Activated CD4-positive, alpha-beta memory T cell treated with anti-CD3 and anti-CD28 coated beads for 36 hours (primary cell): ENCODE measurements at regions of chr13 and their contacts with region 1.

Region 1: DNA sequence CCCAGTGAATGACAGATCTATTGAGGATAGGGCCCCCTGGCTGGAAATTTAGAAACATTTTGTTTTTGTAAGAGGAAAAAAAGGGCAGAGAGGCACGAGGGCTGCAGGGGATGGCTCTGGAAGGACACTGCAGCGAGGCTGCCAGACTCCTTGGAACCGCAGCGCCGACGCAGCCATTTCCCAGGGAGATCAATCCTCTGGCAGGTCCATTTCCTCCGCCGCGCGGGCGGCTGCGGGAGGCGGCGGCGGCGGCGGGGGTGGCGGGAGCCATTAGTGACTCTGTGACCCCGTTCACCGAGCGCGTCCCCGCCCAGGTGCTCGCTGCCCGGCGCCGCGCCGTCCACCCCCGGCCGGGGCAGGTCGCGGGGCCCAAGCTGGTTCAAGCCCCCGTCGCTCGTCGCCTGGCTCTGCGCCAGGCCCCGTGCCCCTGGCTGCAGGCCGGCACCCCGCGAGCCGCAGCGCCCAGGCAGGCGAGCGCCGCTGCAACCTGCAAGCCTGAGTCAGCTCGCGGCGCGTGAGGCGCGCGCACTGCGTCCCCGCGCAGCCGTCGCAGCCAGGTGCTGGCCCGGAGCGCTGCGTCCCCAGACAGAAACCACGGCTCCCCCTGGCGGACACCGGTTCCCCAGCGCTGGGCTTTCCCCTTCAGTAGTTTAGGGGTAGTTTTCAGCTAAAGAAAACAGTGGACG is 192.6 kb downstream of the KATNAL1 start:
- DNase-seq: peak; percentile 95
- H3K4me3 Mint-ChIP-seq: peak overlapping the region; percentile 74
- H3K27ac Mint-ChIP-seq: no peak overlapping the region
- H3K4me1 Mint-ChIP-seq: peaks cover 32% of the 10 kb centered on the region
- H3K27me3 Mint-ChIP-seq: peaks cover 1% of the 10 kb centered on the region

Region 2: DNA sequence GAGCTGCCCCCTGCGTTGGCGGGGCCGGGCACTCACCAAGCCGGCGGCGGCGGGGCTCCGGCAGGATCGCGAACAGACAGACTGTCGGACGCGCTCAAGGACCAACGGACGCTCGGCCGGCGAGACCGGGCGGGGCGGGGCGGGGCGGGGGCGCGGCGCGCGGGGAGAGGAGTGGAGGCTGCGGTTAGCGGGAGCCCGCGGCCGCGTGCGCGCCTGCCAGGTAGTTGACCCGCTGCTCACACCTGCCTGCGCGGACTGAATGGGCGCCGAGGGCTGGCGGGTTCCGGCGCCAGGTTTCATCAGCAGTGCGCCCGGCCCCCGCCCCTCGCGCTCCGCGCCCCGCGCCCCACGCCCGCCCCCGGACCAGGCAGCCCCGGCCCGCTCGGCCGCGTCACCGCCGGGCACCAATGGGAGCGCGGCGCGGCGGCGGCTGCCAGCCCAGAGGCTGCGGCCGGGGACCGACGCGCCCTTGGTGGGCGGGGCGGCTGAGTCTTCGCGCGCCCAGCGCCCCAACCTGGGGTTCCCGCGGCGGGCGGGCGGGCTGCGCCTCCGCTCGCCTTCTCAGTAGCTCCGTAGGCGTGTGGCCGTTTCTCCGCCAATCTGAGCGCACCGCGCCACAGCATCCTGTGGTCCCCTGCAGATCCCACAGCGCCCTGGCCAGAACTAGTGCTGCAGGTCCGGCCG is 519.2 kb before region 1 on chr13 and contains the start of gene SLC7A1:
- CTCF ChIA-PET with region 1: interaction called, 3 read pairs
- POLR2A ChIA-PET with region 1: no interaction called
- intact Hi-C with region 1: loop called (anchors 1 kb)
- DNase-seq: peak; percentile 90
- H3K4me3 Mint-ChIP-seq: peak within 1 kb of the TSS; percentile 89
- H3K27ac Mint-ChIP-seq: peak within 1 kb of the TSS; percentile 97
- H3K4me1 Mint-ChIP-seq: peaks cover 45% of the 10 kb centered on the region
- H3K27me3 Mint-ChIP-seq: peaks cover 1% of the 10 kb centered on the region
- total RNA-seq, gene SLC7A1: 106 to 114 TPM

Region 3: GRCh38 chr13:29805994-29806979 is 308.4 kb before region 1 on chr13:
- CTCF ChIA-PET with region 1: interaction called, 10 read pairs
- POLR2A ChIA-PET with region 1: no interaction called
- intact Hi-C with region 1: no loop called
- DNase-seq: peak; percentile 61
- H3K4me3 Mint-ChIP-seq: no peak overlapping the region
- H3K27ac Mint-ChIP-seq: no peak overlapping the region
- H3K4me1 Mint-ChIP-seq: peaks cover 43% of the 10 kb centered on the region
- H3K27me3 Mint-ChIP-seq: no peaks in the 10 kb centered on the region

Region 4: DNA sequence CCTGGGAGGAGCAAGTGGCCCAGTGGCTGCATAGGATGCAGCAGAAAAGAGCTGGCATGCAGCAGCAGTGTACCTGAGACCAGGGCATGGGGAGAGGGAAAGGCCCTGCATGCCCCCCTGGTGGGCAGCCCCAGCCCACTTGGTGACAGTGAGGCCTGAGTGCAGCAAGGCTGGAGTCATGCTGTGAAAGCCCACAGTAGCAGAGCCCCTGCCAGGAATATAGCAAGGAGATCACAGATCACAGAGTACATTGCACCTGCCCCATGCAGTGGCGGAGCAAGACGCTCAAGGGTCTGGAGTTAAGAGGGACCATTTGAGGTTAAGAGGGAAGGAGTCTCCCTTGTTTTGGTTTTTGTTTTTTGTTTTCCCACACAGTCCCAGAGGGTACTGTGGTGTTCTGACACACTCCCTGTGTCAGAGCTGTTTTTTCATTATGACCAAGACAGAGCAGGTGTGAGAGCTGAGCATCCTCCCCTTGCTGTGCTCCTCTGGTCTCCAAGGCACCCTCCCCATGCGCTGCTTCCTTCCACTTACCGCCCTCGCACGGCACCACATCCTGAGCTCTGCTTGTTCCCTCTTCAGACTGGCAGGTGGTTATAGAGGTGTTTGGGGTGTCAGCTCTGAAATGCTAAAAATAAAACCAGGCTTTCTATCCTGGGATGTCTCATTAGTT is 179.3 kb before region 1 on chr13:
- CTCF ChIA-PET with region 1: interaction called, 72 read pairs
- POLR2A ChIA-PET with region 1: interaction called, 4 read pairs
- intact Hi-C with region 1: loop called (anchors 1 kb)
- DNase-seq: peak; percentile 94
- H3K4me3 Mint-ChIP-seq: peak overlapping the region; percentile 77
- H3K27ac Mint-ChIP-seq: peak overlapping the region; percentile 84
- H3K4me1 Mint-ChIP-seq: peaks cover 50% of the 10 kb centered on the region
- H3K27me3 Mint-ChIP-seq: no peaks in the 10 kb centered on the region

Region 5: DNA sequence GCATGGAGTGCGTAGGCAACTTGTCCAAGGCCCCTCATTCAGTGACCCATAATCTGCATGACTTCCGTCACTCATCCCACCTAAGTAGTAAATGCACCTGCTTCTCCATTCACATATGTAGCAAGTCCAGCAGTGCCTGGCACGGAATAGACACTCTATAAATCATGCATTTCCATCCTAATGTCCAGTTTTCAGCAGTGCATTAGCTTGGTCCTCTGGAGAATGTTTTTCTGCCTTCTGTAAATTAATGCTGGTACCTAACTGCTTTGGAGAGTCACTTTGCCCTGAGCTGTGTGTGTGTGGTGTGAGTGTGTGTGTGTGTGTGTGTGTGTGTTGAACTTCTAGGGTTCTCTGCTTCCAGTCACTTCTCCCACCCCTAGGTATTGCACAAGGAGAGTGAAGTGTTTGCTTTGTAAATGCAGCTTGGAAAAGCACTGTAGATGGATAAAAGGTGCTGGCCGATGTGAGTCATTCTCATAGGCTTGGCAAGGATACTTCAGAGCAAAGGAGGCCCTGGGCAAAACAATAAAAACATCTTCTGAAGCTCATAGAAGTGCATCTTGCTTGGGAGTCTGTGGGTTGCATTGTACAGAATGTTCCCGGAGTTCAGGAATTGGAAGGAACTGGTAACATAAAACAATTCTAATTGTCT is 10.8 kb after region 1 on chr13:
- CTCF ChIA-PET with region 1: interaction called, 55 read pairs
- POLR2A ChIA-PET with region 1: no interaction called
- intact Hi-C with region 1: no loop called
- DNase-seq: no peak
- H3K4me3 Mint-ChIP-seq: no peak overlapping the region
- H3K27ac Mint-ChIP-seq: no peak overlapping the region
- H3K4me1 Mint-ChIP-seq: peaks cover 18% of the 10 kb centered on the region
- H3K27me3 Mint-ChIP-seq: no peaks in the 10 kb centered on the region

Region 6: DNA sequence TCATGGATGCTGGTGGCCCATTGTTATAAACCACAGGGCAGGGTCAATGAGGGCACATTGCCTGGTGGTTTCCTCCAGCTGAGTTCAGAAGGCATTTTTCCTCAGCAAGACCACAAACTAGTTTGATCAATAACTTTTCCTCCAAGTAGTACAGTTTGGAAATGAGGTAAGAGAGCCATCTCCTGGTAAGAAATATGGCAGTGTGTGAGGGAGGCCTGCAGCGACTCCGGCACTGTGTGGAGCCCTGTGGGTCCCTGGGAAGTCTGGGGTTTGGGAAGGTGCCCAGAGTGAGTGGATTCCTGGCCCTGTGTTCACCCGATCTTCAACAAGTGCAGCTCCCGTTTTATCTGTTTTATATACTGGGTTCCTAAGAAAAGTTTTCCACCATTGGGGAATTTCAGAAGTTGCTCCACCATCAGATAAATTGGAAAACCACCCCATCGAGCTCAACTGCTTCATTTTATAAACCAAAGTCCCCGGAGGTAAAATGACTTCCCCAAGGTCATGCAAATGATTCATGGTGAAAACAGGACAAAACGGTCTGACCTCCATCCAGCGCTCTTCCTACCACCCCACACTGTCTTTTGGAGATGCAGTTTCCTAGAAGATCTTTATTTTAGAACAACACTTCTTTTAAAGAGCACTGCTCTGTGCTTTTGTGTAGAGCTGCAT is 44.2 kb after region 1 on chr13:
- CTCF ChIA-PET with region 1: interaction called, 21 read pairs
- POLR2A ChIA-PET with region 1: no interaction called
- intact Hi-C with region 1: no loop called
- DNase-seq: peak; percentile 45
- H3K4me3 Mint-ChIP-seq: no peak overlapping the region
- H3K27ac Mint-ChIP-seq: peak overlapping the region; percentile 80
- H3K4me1 Mint-ChIP-seq: peaks cover 44% of the 10 kb centered on the region
- H3K27me3 Mint-ChIP-seq: no peaks in the 10 kb centered on the region